IMR-90 (cell line): ENCODE measurements at regions of chr5 and their contacts with region 1.

Region 1: GRCh38 chr5:112995764-112996618 is 19.4 kb downstream of the DCP2 start:
- DNase-seq: peak; percentile 76
- ATAC-seq: peak; percentile 88
- H3K4me3 ChIP-seq: no peak overlapping the region
- H3K27ac ChIP-seq: peak overlapping the region; percentile 46; the same call in 1 of the 2 replicates
- H3K4me1 ChIP-seq: peaks cover 9% of the 10 kb centered on the region; the same call in 1 of the 2 replicates
- H3K27me3 ChIP-seq: no peaks in the 10 kb centered on the region
- CTCF ChIP-seq: peak; percentile 97
- POLR2A ChIP-seq: peak; percentile 73; the same call in 1 of the 2 replicates
- RAD21 ChIP-seq: peak; percentile 99

Region 2: GRCh38 chr5:113125371-113125770 is 129.4 kb after region 1 on chr5:
- CTCF ChIA-PET with region 1: no interaction called
- POLR2A ChIA-PET with region 1: no interaction called
- dilution Hi-C with region 1: no loop called
- in situ Hi-C with region 1: no loop called
- intact Hi-C with region 1: loop called (anchors 5 kb)
- DNase-seq: no peak
- ATAC-seq: no peak
- H3K4me3 ChIP-seq: no peak overlapping the region
- H3K27ac ChIP-seq: no peak overlapping the region
- H3K4me1 ChIP-seq: peaks cover 4% of the 10 kb centered on the region
- H3K27me3 ChIP-seq: no peaks in the 10 kb centered on the region
- CTCF ChIP-seq: no peak
- POLR2A ChIP-seq: no peak
- RAD21 ChIP-seq: no peak

Region 3: GRCh38 chr5:113242481-113243348 is 246.7 kb after region 1 on chr5:
- CTCF ChIA-PET with region 1: no interaction called
- POLR2A ChIA-PET with region 1: no interaction called
- dilution Hi-C with region 1: no loop called
- in situ Hi-C with region 1: no loop called
- intact Hi-C with region 1: no loop called
- DNase-seq: peak; percentile 17
- ATAC-seq: no peak
- H3K4me3 ChIP-seq: no peak overlapping the region
- H3K27ac ChIP-seq: no peak overlapping the region
- H3K4me1 ChIP-seq: peaks cover 7% of the 10 kb centered on the region
- H3K27me3 ChIP-seq: no peaks in the 10 kb centered on the region
- CTCF ChIP-seq: no peak
- POLR2A ChIP-seq: no peak
- RAD21 ChIP-seq: no peak

Region 4: DNA sequence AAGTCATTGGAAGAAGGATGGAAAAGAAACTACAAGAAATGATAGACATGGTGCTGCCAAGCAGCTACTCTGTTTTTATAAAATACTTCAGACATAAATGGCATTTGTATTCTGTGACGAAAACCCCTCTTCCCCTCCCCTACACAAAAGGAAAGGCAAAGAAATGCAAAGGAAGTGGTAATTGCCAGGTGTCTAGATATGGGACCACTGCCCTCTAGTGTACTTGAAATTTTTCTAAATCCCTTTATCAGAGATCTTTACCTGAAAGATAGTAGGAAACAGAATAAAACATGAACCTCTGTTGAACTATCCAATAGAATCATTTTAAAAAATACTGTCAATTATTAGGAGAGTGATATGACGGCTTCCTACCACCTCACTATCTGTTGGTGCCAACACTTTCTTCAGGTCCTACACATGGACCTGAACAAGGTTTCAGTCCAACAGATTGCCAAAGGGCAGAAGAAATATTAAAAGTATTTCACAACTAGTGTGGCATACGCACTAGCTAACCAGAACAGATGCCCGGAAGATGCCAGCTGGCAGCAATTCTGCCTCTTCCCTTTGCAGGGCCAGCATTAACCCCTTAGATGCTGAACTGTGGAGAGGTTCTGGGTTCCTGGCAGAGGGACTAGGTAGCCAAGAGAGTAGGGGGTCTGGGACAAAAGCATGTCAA is 334.7 kb after region 1 on chr5:
- CTCF ChIA-PET with region 1: interaction called, 8 read pairs
- POLR2A ChIA-PET with region 1: no interaction called
- dilution Hi-C with region 1: no loop called
- in situ Hi-C with region 1: no loop called
- intact Hi-C with region 1: loop called (anchors 1 kb)
- DNase-seq: peak; percentile 60
- ATAC-seq: peak; percentile 51
- H3K4me3 ChIP-seq: no peak overlapping the region
- H3K27ac ChIP-seq: peak overlapping the region; percentile 15; the same call in 1 of the 2 replicates
- H3K4me1 ChIP-seq: peaks cover 6% of the 10 kb centered on the region
- H3K27me3 ChIP-seq: no peaks in the 10 kb centered on the region
- CTCF ChIP-seq: peak; percentile 51
- POLR2A ChIP-seq: no peak
- RAD21 ChIP-seq: peak; percentile 73

Region 5: DNA sequence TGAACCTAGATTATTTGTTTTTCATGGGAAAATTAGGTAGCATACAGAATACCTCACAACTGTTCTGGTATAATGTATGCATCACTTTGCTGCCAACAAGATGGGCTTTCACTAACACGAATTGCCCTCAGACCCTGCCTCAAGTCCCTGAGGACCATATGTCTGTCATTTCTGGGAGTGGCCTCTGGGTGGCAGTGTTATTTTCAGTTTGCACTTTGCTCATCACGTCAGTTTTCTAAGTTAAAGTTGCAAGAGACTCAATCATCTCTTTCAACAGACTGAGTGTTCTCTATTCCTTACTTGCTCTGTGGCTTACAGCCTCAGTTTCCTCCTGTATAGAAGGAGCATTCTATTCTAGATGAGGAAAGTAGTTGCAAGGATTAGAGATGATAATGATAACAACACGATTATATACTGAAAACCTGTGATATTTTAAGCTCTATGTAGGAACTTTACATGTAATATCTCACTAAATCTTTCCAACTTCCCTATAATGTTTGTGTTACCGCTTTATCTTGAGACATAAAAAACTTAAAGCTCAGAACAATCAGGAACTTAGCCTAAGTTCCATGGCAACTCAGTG is 383.1 kb after region 1 on chr5:
- CTCF ChIA-PET with region 1: interaction called, 3 read pairs
- POLR2A ChIA-PET with region 1: no interaction called
- dilution Hi-C with region 1: no loop called
- in situ Hi-C with region 1: no loop called
- intact Hi-C with region 1: loop called (anchors 5 kb)
- DNase-seq: peak; percentile 62
- ATAC-seq: peak; percentile 66
- H3K4me3 ChIP-seq: no peak overlapping the region
- H3K27ac ChIP-seq: peak overlapping the region; percentile 19; the same call in 1 of the 2 replicates
- H3K4me1 ChIP-seq: peaks cover 16% of the 10 kb centered on the region
- H3K27me3 ChIP-seq: no peaks in the 10 kb centered on the region
- CTCF ChIP-seq: peak; percentile 64
- POLR2A ChIP-seq: no peak
- RAD21 ChIP-seq: peak; percentile 61

Region 6: DNA sequence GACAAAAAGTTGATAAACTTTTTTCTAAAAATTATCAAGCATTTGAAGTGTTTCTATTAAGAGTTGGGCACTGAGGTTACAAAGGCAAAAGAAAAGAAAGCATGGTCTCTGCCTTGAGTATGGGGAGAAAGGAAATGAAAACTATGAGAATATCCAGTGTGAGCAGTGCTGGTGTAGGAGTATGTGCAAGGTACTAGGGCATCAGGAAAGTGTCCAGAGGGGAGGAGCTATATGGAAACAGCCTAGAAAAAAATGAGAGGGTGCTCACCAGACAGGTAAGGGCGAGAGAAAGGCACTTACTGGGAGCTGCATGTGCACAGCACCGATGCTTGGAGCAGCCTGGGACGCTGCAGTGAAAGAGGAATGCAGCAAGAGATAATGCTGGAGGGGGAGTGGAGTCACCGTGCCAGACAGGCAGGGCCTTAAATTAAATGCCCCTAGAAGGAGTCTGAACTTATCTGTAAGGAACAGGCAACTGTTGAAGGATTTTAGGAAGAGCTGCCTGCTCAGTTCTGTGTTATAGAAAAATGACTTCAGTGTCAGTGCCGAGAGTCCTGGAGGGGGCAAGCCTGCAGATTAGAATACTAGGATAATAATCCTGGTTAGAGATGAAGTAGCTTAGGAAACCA is 478.2 kb after region 1 on chr5:
- CTCF ChIA-PET with region 1: no interaction called
- POLR2A ChIA-PET with region 1: no interaction called
- dilution Hi-C with region 1: no loop called
- in situ Hi-C with region 1: no loop called
- intact Hi-C with region 1: no loop called
- DNase-seq: no peak
- ATAC-seq: peak; percentile 90
- H3K4me3 ChIP-seq: no peak overlapping the region
- H3K27ac ChIP-seq: no peak overlapping the region
- H3K4me1 ChIP-seq: no peaks in the 10 kb centered on the region
- H3K27me3 ChIP-seq: no peaks in the 10 kb centered on the region
- CTCF ChIP-seq: no peak
- POLR2A ChIP-seq: no peak
- RAD21 ChIP-seq: no peak

Region 7: GRCh38 chr5:113513384-113514288 is 517.6 kb after region 1 on chr5 and contains the start of gene YTHDC2:
- CTCF ChIA-PET with region 1: interaction called, 23 read pairs
- POLR2A ChIA-PET with region 1: no interaction called
- dilution Hi-C with region 1: no loop called
- in situ Hi-C with region 1: no loop called
- intact Hi-C with region 1: loop called (anchors 1 kb)
- DNase-seq: peak; percentile 87
- ATAC-seq: peak; percentile 97
- H3K4me3 ChIP-seq: peak within 1 kb of the TSS; percentile 60
- H3K27ac ChIP-seq: peak within 1 kb of the TSS; percentile 79
- H3K4me1 ChIP-seq: no peaks in the 10 kb centered on the region; the same call in 1 of the 2 replicates
- H3K27me3 ChIP-seq: no peaks in the 10 kb centered on the region
- CTCF ChIP-seq: peak; percentile 44
- POLR2A ChIP-seq: peak; percentile 81
- RAD21 ChIP-seq: peak; percentile 49
- total RNA-seq, gene YTHDC2: 13.4 and 22.5 TPM in 2 replicates

Region 8: DNA sequence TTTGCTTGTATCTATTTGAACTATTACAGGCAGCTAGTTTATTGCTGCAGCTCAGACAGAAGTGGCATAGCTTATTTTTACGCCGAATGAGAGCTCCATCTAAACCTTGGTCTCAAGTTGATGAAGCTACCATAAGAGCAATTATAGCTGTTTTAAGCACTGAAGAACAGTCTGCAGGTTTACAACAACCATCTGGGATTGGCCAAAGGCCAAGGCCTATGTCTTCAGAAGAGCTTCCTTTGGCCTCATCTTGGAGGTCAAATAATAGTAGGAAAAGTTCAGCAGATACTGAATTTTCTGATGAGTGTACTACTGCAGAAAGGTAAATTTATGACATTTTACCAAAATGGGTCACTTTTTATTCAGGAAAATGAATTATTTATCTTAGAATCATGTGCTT is 585.4 kb after region 1 on chr5:
- CTCF ChIA-PET with region 1: no interaction called
- POLR2A ChIA-PET with region 1: no interaction called
- dilution Hi-C with region 1: no loop called
- in situ Hi-C with region 1: loop called (anchors 10 kb)
- intact Hi-C with region 1: no loop called
- DNase-seq: no peak
- ATAC-seq: no peak
- H3K4me3 ChIP-seq: no peak overlapping the region
- H3K27ac ChIP-seq: no peak overlapping the region
- H3K4me1 ChIP-seq: no peaks in the 10 kb centered on the region
- H3K27me3 ChIP-seq: no peaks in the 10 kb centered on the region
- CTCF ChIP-seq: no peak
- POLR2A ChIP-seq: no peak
- RAD21 ChIP-seq: no peak

Region 9: DNA sequence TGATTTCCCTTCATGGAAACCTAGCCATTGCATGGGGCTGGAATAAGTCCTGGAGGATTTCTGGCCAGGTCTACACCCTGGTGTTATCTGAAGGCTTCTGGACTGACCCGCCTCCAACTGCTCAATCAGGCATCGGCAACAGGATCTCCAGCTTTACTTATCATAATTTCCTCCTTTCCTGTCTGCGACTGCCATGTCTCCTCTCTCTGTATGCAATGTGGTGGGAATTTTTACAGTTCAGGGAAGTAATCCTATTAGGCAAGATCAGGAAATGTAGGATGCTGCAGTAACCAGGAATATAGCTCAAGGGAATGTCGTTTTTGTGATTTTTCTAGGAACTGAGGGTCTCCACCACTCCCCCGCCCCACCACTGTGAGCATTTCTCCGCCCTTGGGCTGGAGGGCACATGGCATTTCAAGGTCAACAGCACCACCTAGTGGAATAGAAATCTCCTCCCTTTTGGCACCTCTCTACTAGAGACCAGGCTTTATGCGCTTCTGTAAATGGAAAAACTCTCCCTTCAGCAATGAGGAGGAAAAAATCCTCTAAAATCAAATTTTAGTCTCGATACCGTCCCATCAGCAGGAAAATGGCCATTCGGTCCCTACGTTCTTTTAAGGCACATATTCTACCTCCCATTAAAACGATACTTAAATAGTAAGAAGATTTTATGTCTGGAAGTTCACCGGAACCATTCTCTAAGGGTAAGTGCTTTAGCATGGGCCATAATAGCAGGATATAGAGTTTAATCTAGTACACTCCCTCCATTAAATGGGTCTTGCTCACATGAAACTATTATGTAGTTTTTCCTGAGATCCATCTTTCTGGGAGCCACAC is 610.5 kb after region 1 on chr5:
- CTCF ChIA-PET with region 1: interaction called, 8 read pairs
- POLR2A ChIA-PET with region 1: no interaction called
- dilution Hi-C with region 1: no loop called
- in situ Hi-C with region 1: no loop called
- intact Hi-C with region 1: loop called (anchors 1 kb)
- DNase-seq: peak; percentile 56
- ATAC-seq: peak; percentile 90
- H3K4me3 ChIP-seq: no peak overlapping the region
- H3K27ac ChIP-seq: no peak overlapping the region
- H3K4me1 ChIP-seq: peaks cover 6% of the 10 kb centered on the region; the same call in 1 of the 2 replicates
- H3K27me3 ChIP-seq: no peaks in the 10 kb centered on the region; the same call in 1 of the 2 replicates
- CTCF ChIP-seq: peak; percentile 80
- POLR2A ChIP-seq: no peak
- RAD21 ChIP-seq: peak; percentile 91